ENCODE measurements at regions of chr12 and their contacts with region 1.

Region 1: DNA sequence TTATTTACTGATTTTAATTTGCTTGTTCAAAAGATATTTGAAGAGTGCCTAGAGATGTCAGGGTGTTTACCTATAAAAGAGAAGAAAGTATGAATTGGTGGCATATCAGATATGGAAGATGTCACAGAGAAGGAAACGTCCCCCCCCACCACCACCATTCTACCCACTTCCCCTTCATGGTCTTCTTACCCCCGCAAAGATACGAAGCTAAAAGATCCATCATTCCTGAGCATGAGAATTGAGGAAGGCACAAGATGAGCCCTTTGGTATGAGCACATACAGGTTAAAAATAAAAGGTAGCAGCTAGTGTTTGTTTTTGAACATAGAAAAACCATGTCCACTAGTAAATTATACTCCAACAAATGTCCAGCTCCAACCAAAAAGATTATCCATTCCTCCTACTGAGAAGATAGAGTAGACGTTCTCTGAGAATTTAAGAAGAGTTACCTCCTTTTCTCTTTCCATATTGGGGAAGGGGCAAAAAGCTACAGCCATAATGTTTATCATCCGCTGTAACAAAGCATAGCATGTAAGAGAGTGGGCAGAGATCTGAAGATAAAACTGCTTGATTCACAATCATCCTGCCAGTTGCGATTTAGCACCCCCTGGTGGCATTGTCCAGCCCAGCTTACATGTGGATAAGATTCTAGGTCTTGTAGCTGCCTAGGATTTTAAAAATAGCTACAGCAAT is 29.1 kb downstream of the NFYB start:
- DNase-seq: peak; percentile 90
- H3K4me3 ChIP-seq: no peak overlapping the region
- H3K27ac ChIP-seq: no peak overlapping the region
- H3K4me1 ChIP-seq: no peaks in the 10 kb centered on the region
- H3K27me3 ChIP-seq: no peaks in the 10 kb centered on the region
- CTCF ChIP-seq: peak; percentile 83 to 92
- POLR2A ChIP-seq: no peak

Region 2: DNA sequence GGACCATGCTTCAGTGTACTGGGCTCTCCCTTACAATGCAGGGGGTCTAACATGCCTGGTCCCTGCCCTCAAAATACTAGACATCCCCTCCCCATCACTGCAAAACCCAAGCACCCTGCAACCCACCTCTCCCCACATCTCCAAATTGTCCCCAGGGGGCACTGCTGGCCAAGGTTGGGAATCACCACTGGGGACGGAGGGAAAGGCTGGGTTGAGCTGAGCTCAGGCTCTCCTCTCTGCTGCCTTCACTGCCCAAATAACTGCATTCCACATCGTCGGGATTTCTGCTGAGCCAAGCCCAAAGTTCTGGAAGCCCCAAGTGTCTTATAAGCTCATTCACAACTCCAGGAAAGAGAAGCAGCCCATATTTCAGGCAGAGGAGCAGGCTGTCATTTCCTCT is 337.4 kb before region 1 on chr12:
- CTCF ChIA-PET with region 1: interaction called, 6 read pairs
- POLR2A ChIA-PET with region 1: no interaction called
- dilution Hi-C with region 1: no loop called
- intact Hi-C with region 1: loop called (anchors 2 kb)
- DNase-seq: peak; percentile 46
- H3K4me3 ChIP-seq: no peak overlapping the region
- H3K27ac ChIP-seq: no peak overlapping the region
- H3K4me1 ChIP-seq: no peaks in the 10 kb centered on the region
- H3K27me3 ChIP-seq: no peaks in the 10 kb centered on the region
- CTCF ChIP-seq: peak; percentile 56 to 70
- POLR2A ChIP-seq: no peak

Region 3: GRCh38 chr12:103884316-103884715 is 224.6 kb before region 1 on chr12:
- CTCF ChIA-PET with region 1: interaction called, 32 read pairs
- POLR2A ChIA-PET with region 1: no interaction called
- dilution Hi-C with region 1: no loop called
- intact Hi-C with region 1: loop called (anchors 1 kb)
- DNase-seq: peak; percentile 72
- H3K4me3 ChIP-seq: no peak overlapping the region
- H3K27ac ChIP-seq: no peak overlapping the region
- H3K4me1 ChIP-seq: peaks cover 6% of the 10 kb centered on the region
- H3K27me3 ChIP-seq: peaks cover 0 to 7% of the 10 kb centered on the region in 2 experiments
- CTCF ChIP-seq: peak in 1 of 2 donors; percentile 25
- POLR2A ChIP-seq: no peak

Region 4: GRCh38 chr12:103965590-103966504 is 143.1 kb before region 1 on chr12 and contains the start of gene TDG:
- CTCF ChIA-PET with region 1: interaction called, 13 read pairs
- POLR2A ChIA-PET with region 1: no interaction called
- dilution Hi-C with region 1: no loop called
- intact Hi-C with region 1: loop called (anchors 1 kb)
- DNase-seq: peak; percentile 99
- H3K4me3 ChIP-seq: peak within 1 kb of the TSS; percentile 88 to 98 (median 93)
- H3K27ac ChIP-seq: peak within 1 kb of the TSS; percentile 74
- H3K4me1 ChIP-seq: peaks cover 10% of the 10 kb centered on the region
- H3K27me3 ChIP-seq: no peaks in the 10 kb centered on the region
- CTCF ChIP-seq: peak in 1 of 2 donors; percentile 14
- POLR2A ChIP-seq: peak; percentile 99
- total RNA-seq, gene TDG: 35.1 and 36.8 TPM in 2 replicates

Region 5: DNA sequence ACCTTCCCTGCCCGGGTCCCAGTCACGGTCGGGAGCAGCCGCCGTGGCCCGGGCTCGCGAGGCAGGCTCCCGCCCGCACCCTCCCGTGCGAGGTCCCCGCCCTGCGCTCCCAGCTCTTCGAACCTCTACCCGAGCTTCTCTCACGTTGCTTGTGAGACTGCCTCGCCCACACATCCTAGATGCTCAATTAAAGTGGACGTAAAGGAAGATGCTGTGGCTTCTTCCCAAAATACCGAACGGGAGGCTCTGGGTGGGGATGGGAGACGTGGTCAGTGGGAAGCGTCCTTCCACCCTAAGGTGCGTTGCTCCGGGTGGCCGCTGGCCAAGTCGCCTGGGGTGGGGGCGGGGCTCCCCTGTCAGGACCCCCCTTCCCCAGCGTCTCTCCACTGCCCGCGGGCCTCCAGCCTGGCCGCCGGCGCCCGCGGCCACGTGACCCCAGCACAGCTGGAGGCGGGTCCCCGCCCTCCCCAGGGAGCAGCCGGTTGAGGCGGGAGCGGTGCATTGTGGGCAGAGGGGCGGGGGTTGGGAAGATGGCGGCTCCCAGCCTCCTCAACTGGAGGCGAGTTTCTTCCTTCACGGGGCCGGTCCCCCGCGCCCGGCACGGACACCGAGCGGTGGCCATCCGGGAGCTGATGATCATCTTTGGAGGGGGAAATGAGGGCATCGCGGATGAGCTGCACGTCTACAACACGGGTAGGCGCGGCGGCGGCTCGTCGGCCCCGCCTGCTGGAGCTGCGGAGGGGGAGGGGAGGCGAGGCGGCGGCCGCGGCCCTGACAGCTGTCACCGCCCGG is 44.7 kb before region 1 on chr12 and contains the start of gene HCFC2:
- CTCF ChIA-PET with region 1: interaction called, 106 read pairs
- POLR2A ChIA-PET with region 1: no interaction called
- dilution Hi-C with region 1: no loop called
- intact Hi-C with region 1: no loop called
- DNase-seq: peak; percentile 89
- H3K4me3 ChIP-seq: peak within 1 kb of the TSS; percentile 86 to 89 (median 86)
- H3K27ac ChIP-seq: peak within 1 kb of the TSS; percentile 41
- H3K4me1 ChIP-seq: peaks cover 10% of the 10 kb centered on the region
- H3K27me3 ChIP-seq: no peaks in the 10 kb centered on the region
- CTCF ChIP-seq: no peak
- POLR2A ChIP-seq: peak; percentile 75
- total RNA-seq, gene HCFC2: 13.4 and 15.6 TPM in 2 replicates

Region 6: DNA sequence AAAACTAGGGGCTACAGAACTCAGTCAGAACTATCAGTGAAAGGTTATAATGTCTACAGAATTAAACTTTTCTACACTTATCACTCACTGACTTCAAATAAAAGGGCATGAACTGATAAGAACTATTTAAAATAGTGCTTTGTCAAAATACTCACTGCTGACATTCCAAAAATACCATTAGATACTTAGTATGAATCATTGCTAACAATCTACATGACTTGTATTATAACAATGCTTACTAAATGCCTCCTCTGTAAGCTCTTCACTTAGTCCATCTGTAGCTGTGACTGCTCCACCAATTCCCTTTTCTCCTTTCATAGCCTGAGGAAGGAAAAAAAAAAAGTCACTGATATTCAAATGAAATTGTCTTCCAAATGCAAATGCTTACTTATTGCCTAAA is 12.1 kb after region 1 on chr12:
- CTCF ChIA-PET with region 1: interaction called, 15 read pairs
- POLR2A ChIA-PET with region 1: no interaction called
- dilution Hi-C with region 1: no loop called
- intact Hi-C with region 1: no loop called
- DNase-seq: peak; percentile 41
- H3K4me3 ChIP-seq: no peak overlapping the region
- H3K27ac ChIP-seq: no peak overlapping the region
- H3K4me1 ChIP-seq: peaks cover 12% of the 10 kb centered on the region
- H3K27me3 ChIP-seq: no peaks in the 10 kb centered on the region
- CTCF ChIP-seq: no peak
- POLR2A ChIP-seq: no peak

Measured in endothelial cell of umbilical vein (primary cell).